Left ventricle myocardium superior (tissue), 1 donor: ENCODE measurements at regions of chr20 and their contacts with region 1.

Region 1: GRCh38 chr20:45095753-45096371 is 5.1 kb downstream of the KCNS1 start:
- DNase-seq: no peak
- ATAC-seq: peak; percentile 72

Region 2: DNA sequence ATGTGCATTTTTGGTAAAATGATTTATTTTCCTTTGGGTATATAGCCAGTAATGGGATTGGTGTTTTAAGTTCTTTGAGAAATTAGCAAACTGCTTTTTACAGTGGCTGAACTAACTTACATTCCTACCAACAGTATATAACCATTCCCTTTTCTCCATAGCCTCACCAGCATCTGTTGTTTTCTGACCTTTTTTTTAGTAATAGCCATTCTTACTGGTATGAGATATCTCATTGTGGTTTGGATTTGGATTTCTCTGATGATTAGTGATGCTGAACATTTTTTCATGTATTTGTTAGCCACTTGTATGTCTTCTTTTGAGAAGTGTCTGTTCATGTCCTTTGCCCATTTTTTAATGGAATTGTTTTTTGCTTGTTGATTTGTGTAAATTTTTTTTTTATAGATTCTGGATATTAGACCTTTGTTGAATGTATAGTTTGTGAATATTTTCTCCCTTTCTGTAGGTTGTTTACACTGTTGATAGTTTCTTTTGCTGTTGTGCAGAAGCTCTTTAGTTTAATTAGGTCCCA is 87.3 kb before region 1 on chr20:
- intact Hi-C with region 1: loop called (anchors 2 kb)
- DNase-seq: no peak
- ATAC-seq: no peak

Region 3: DNA sequence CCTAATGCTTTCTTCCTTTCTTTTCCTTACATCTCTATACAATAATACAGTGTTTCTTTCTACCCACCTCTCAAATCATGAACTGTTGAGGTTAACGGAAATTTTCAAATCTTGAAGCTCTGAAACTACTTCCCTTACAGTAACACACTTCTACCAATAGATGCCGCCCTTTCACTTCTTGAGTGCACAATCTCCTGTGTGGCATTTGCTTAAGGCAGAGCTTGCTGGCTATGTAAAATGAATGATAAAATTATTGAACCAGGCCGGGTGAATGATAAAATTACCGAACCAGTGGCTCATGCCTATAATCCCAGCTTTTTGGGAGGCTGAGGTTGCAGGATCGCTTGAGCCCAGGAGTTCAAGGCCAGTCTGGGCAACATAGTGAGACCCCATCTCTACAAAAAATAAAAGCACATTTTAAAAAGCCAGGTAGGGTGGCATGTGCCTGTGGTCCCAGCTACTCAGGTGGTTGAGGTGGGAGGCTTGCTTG is 51.7 kb before region 1 on chr20:
- intact Hi-C with region 1: loop called (anchors 5 kb)
- DNase-seq: no peak
- ATAC-seq: peak; percentile 79

Region 4: DNA sequence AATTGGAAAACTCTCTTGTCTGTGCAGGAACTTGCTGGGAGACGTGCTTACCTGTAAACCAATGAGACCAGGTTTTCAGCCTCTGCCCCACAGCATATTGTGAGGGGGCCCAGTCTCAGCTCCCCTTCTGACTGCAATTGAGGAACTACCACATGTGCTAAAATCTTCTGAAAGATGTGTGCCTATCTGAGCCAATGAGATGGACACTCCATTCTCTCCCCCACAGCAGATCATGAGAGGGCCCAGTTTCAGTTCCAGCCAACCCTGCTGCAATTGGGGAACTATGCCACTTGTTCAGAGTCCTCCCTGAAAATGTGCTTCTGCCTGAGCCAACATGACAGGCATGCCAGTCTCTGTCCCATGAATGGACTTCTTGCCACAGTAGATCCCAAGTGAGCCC is 57.9 kb after region 1 on chr20:
- intact Hi-C with region 1: no loop called
- DNase-seq: no peak
- ATAC-seq: no peak

Region 5: GRCh38 chr20:45507011-45507820 is 411.4 kb after region 1 on chr20:
- intact Hi-C with region 1: no loop called
- DNase-seq: no peak
- ATAC-seq: no peak